Naive thymus-derived CD4-positive, alpha-beta T cell (primary cell): ENCODE measurements at regions of chr21 and their contacts with region 1.

Region 1: DNA sequence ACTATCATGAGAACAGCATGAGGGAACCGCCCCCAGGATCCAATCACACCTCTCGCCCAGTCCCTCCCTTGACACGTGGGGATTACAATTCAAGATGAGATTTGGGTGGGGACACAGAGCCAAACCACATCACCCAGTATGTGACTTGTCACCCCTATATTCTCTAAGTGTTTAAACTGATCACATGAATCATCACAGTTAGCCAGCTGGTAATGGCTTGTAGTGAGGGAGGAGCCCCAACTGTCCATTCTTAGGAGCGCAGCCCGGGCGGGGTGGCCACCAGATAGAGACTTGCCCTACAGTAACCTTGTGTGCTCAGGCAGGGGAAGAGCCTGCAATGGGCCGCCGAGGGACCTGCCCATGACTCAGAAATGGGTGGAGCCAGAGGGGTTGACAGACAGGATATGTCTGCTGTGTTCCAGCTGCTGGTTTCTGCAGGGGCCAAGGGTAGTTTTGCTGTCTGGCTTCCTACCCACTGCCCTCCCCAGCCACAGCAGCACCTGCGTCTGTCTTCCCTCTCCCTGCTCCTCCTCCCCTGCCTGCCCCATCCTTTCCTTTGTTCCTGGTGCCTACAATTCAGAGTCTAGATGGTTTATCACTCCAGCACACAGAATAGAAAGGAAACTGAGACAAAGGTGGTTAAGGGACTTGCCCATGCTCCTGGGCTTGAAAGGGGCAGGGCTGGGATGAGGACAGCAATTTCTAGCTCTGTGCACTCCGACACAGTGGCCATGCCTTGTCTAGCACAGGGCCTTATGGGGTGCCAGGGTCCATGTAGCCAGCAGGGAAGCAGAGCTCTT is 9.2 kb downstream of the ABCG1 start:
- DNase-seq: peak; percentile 72 to 97 (median 80)
- ATAC-seq: peak; percentile 94
- H3K4me3 ChIP-seq: peak overlapping the region; percentile 29
- H3K4me3 Mint-ChIP-seq: peak overlapping the region; percentile 47 to 77 (median 70)
- H3K27ac ChIP-seq: peak overlapping the region; percentile 71
- H3K27ac Mint-ChIP-seq: peak overlapping the region; percentile 78 to 96 (median 90)
- H3K4me1 ChIP-seq: peaks cover 44 to 45% of the 10 kb centered on the region in 2 donors
- H3K4me1 Mint-ChIP-seq: peaks cover 41 to 92% (median 86%) of the 10 kb centered on the region in 7 donors
- H3K27me3 ChIP-seq: no peaks in the 10 kb centered on the region
- H3K27me3 Mint-ChIP-seq: no peaks in the 10 kb centered on the region

Region 2: DNA sequence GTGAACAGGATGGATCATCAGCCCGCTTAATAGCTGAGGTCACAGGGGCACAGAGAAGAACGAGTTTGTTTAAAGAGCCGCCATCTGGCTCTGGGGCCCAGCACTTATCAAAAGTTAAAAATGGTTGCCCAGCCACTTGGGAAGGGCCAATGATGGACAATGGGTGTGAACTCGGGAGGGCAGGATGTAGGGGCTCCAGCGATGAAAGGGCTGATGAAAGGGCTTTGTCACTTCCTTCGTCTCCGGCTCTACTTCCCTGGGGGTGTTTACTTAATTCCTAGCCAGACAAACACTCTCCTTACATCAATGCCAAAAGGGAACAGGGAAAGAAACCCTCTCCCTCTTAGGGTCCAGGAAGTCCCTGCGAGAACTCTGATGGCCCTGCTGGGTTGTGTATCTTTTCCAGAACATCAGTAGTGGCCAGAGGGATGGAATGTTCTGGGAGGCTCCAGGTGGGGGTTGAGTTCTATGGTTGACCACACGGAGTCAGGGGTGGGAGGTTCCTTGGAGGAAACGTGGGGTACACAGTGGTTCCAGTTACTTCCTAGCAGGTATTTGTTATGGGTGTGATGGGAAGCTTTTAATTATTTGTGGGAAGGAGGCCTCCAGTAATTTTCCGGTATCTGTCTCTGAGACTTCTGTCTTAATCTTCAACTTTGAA is 18.2 kb before region 1 on chr21:
- CTCF ChIA-PET with region 1: no interaction called
- POLR2A ChIA-PET with region 1: no interaction called
- intact Hi-C with region 1: no loop called
- DNase-seq: peak in 1 of 9 donors; percentile 13
- ATAC-seq: no peak
- H3K4me3 ChIP-seq: no peak overlapping the region
- H3K4me3 Mint-ChIP-seq: no peak overlapping the region
- H3K27ac ChIP-seq: no peak overlapping the region
- H3K27ac Mint-ChIP-seq: no peak overlapping the region
- H3K4me1 ChIP-seq: no peaks in the 10 kb centered on the region
- H3K4me1 Mint-ChIP-seq: peaks cover 0 to 13% (median 5%) of the 10 kb centered on the region in 7 donors
- H3K27me3 ChIP-seq: no peaks in the 10 kb centered on the region
- H3K27me3 Mint-ChIP-seq: peaks cover 0 to 31% (median 0%) of the 10 kb centered on the region in 5 donors

Region 3: DNA sequence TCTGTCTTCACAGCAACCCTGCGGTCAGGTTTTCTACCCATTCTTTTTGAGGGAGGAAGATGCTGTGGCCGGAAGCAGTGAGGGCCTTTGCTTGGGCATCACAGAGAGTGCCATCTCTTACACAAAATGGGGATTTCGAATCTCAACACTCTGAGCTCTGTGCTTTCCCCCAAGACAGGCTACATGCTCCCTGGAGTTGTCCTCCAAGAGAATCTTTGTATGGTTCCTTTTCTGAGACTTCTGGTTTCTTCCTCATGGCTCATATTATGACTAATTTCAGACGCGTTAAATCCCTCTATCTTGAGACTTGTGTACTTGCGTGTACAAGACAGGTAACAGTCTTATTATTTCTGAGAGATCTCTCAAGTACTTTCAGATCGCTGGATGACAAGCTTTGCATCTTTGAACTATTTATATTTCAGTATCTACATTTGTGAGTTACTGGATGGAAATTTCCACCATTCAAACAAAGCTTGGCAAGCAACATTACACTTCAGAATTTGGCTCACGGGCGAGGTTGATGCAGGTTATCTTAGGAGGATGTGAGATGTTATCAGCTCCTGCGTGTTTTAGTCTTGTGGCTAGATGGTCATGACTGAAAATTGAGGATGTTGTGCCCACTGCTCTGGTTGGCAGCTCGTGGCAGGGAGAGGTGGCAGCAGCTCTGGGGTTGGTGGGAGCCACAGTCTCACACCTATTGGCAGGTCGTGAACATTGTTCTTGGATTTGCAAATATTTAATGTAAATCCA is 10.3 kb after region 1 on chr21:
- CTCF ChIA-PET with region 1: no interaction called
- POLR2A ChIA-PET with region 1: interaction called, 4 read pairs
- intact Hi-C with region 1: loop called (anchors 1 kb)
- DNase-seq: peak in 7 of 9 donors; percentile 59 to 82 (median 76)
- ATAC-seq: peak; percentile 44
- H3K4me3 ChIP-seq: no peak overlapping the region
- H3K4me3 Mint-ChIP-seq: peak overlapping the region; percentile 58 to 86 (median 74)
- H3K27ac ChIP-seq: peak overlapping the region; percentile 48
- H3K27ac Mint-ChIP-seq: peak overlapping the region; percentile 52 to 99 (median 83)
- H3K4me1 ChIP-seq: peaks cover 58 to 61% of the 10 kb centered on the region in 2 donors
- H3K4me1 Mint-ChIP-seq: peaks cover 52 to 80% (median 63%) of the 10 kb centered on the region in 7 donors
- H3K27me3 ChIP-seq: no peaks in the 10 kb centered on the region
- H3K27me3 Mint-ChIP-seq: no peaks in the 10 kb centered on the region

Region 4: GRCh38 chr21:42414928-42415769 is 187.0 kb after region 1 on chr21:
- CTCF ChIA-PET with region 1: no interaction called
- POLR2A ChIA-PET with region 1: no interaction called
- intact Hi-C with region 1: loop called in 1 of 2 experiments (anchors 1 kb)
- DNase-seq: peak; percentile 48 to 96 (median 80)
- ATAC-seq: peak; percentile 96
- H3K4me3 ChIP-seq: peak overlapping the region; percentile 49
- H3K4me3 Mint-ChIP-seq: peak overlapping the region; percentile 65 to 85 (median 75)
- H3K27ac ChIP-seq: peak overlapping the region; percentile 92
- H3K27ac Mint-ChIP-seq: peak overlapping the region in 8 of 9 donors; percentile 88 to 99 (median 97)
- H3K4me1 ChIP-seq: peaks cover 59 to 77% of the 10 kb centered on the region in 2 donors
- H3K4me1 Mint-ChIP-seq: peaks cover 23 to 75% (median 69%) of the 10 kb centered on the region in 7 donors
- H3K27me3 ChIP-seq: no peaks in the 10 kb centered on the region
- H3K27me3 Mint-ChIP-seq: no peaks in the 10 kb centered on the region